ENCODE measurements at regions of chr20 and their contacts with region 1.

Region 1: GRCh38 chr20:38501861-38502436 is 29.3 kb downstream of the RALGAPB start:
- DNase-seq: no peak
- ATAC-seq: no peak
- H3K4me3 ChIP-seq: no peak overlapping the region
- H3K27ac ChIP-seq: no peak overlapping the region
- H3K4me1 ChIP-seq: no peaks in the 10 kb centered on the region
- H3K27me3 ChIP-seq: no peaks in the 10 kb centered on the region
- CTCF ChIP-seq: no peak
- POLR2A ChIP-seq: no peak

Region 2: GRCh38 chr20:37192137-37192854 is 1309.7 kb before region 1 on chr20:
- intact Hi-C with region 1: no loop called
- DNase-seq: peak; percentile 84 to 94 (median 89)
- ATAC-seq: peak; percentile 42 to 91 (median 90)
- H3K4me3 ChIP-seq: no peak overlapping the region
- H3K27ac ChIP-seq: no peak overlapping the region
- H3K4me1 ChIP-seq: peaks cover 0 to 54% (median 28%) of the 10 kb centered on the region in 12 donors
- H3K27me3 ChIP-seq: no peaks in the 10 kb centered on the region
- CTCF ChIP-seq: peak; percentile 81 to 98 (median 92)
- POLR2A ChIP-seq: no peak

Region 3: GRCh38 chr20:38515631-38516030 is 13.7 kb after region 1 on chr20:
- intact Hi-C with region 1: loop called in 1 of 10 experiments (anchors 2 kb)
- DNase-seq: no peak
- ATAC-seq: no peak
- H3K4me3 ChIP-seq: no peak overlapping the region
- H3K27ac ChIP-seq: no peak overlapping the region
- H3K4me1 ChIP-seq: peaks cover 0 to 3% (median 0%) of the 10 kb centered on the region in 12 donors
- H3K27me3 ChIP-seq: no peaks in the 10 kb centered on the region
- CTCF ChIP-seq: no peak
- POLR2A ChIP-seq: no peak

Measured in heart left ventricle (tissue), 16 donors.